IMR-90 (cell line): ENCODE measurements at regions of chr3 and their contacts with region 1.

Region 1: DNA sequence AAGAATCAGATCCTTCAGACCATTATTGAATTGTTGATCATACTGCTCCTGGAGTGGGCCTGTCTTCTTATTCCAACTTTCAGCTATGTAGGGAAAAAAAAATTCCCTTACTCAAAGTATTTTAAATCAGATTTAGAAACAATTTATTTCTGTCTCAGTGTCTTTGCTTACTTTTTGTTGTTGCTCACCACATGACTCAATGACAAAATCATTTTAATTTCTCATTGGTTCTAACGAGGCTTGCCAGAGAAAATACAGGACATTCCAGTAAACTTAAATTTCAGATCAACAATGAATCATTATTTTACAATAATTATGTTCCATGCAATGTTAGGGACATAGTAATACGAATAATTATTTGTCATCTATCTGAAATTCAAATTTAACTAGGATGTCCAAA is 748.5 kb upstream of the CBLB start:
- DNase-seq: peak; percentile 41
- ATAC-seq: peak; percentile 67
- H3K4me3 ChIP-seq: no peak overlapping the region
- H3K27ac ChIP-seq: no peak overlapping the region
- H3K4me1 ChIP-seq: 0 out of 2 replicates have a peak, but pooled peaks cover 2% of the 10 kb centered on the region
- H3K27me3 ChIP-seq: no peaks in the 10 kb centered on the region
- CTCF ChIP-seq: no peak
- POLR2A ChIP-seq: no peak
- RAD21 ChIP-seq: no peak

Region 2: GRCh38 chr3:107055181-107055942 is 438.1 kb after region 1 on chr3:
- CTCF ChIA-PET with region 1: no interaction called
- POLR2A ChIA-PET with region 1: no interaction called
- dilution Hi-C with region 1: no loop called
- in situ Hi-C with region 1: loop called (anchors 5 kb)
- intact Hi-C with region 1: no loop called
- DNase-seq: no peak
- ATAC-seq: no peak
- H3K4me3 ChIP-seq: no peak overlapping the region
- H3K27ac ChIP-seq: no peak overlapping the region
- H3K4me1 ChIP-seq: no peaks in the 10 kb centered on the region
- H3K27me3 ChIP-seq: no peaks in the 10 kb centered on the region
- CTCF ChIP-seq: no peak
- POLR2A ChIP-seq: no peak
- RAD21 ChIP-seq: no peak